ENCODE measurements at regions of chr6 and their contacts with region 1.

Region 1: DNA sequence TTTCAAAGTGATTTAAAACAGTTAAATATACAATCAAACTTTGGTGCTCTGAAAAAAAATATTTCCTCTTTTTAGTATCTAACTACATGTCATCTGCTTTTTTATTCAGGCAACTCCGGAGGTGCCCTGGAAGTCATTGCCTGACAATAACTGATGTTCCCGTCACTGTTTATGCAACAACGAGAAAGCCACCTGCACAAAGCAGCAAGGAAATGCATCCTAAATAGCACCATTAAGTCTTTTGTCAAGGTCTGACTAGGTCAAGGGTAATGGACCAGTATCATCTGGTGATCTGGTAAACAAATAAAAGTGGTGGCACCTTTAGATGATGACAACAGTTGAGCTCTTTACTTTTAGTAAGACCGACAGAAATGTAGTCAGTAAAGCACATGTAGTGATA is 13.2 kb downstream of the FAM229B start:
- DNase-seq: no peak
- ATAC-seq: no peak
- H3K4me3 ChIP-seq: no peak overlapping the region
- H3K4me3 Mint-ChIP-seq: no peak overlapping the region
- H3K27ac ChIP-seq: no peak overlapping the region
- H3K27ac Mint-ChIP-seq: no peak overlapping the region
- H3K4me1 ChIP-seq: no peaks in the 10 kb centered on the region
- H3K4me1 Mint-ChIP-seq: no peaks in the 10 kb centered on the region
- H3K27me3 ChIP-seq: no peaks in the 10 kb centered on the region
- H3K27me3 Mint-ChIP-seq: no peaks in the 10 kb centered on the region
- CTCF ChIP-seq: no peak

Region 2: DNA sequence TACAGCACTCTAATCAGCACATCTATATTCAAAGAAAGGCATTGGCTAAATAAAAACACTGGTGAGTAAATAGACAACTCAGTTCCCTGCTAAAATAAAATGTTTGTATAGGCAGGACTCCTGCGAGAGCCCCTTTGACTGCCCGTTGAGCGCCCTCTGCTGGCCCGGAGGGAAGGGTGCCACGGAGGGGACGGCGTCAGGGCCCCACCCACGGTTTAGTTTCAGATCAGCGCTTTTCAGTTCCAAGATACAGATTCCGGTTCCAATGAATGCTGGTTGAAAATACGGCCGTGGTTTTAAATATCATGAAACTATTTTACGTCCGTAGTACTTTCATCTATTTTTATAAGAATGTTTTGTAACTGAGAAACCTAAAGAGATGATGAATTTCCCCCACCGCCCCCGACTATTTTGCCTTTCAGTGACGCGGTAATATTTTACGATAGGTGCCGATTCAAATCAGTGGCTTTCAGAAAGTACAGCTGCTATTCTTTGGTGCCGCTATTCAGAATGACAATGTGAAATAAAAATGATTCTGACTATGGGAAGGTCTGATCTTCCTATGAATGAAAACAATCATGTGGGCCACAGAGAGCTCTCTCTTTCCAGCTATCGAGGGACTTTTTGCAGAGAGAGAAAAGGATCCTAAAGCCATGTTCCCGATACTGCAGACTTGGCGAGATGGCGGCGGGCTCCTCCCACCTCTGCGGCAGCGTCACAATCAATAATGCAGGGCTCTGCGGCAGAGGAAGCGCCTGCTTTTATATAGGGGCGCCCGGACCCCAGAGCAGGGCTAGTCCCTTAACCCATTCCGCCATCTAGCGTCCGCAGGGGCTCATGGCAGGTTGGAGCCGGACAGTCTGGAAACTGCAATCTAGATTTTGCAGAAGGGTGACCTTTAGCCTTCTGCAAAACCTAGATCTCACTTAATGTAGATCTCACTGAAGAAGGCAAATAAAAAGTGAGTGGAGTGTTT is 57.2 kb before region 1 on chr6:
- CTCF ChIA-PET with region 1: no interaction called
- POLR2A ChIA-PET with region 1: no interaction called
- intact Hi-C with region 1: no loop called
- DNase-seq: peak; percentile 87 to 96 (median 93)
- ATAC-seq: peak; percentile 93
- H3K4me3 ChIP-seq: peak overlapping the region; percentile 56 to 65
- H3K4me3 Mint-ChIP-seq: peak overlapping the region; percentile 97
- H3K27ac ChIP-seq: peak overlapping the region; percentile 83 to 88
- H3K27ac Mint-ChIP-seq: peak overlapping the region; percentile 99
- H3K4me1 ChIP-seq: peaks cover 6% of the 10 kb centered on the region
- H3K4me1 Mint-ChIP-seq: peaks cover 21% of the 10 kb centered on the region
- H3K27me3 ChIP-seq: no peaks in the 10 kb centered on the region
- H3K27me3 Mint-ChIP-seq: no peaks in the 10 kb centered on the region
- CTCF ChIP-seq: peak; percentile 82

Region 3: DNA sequence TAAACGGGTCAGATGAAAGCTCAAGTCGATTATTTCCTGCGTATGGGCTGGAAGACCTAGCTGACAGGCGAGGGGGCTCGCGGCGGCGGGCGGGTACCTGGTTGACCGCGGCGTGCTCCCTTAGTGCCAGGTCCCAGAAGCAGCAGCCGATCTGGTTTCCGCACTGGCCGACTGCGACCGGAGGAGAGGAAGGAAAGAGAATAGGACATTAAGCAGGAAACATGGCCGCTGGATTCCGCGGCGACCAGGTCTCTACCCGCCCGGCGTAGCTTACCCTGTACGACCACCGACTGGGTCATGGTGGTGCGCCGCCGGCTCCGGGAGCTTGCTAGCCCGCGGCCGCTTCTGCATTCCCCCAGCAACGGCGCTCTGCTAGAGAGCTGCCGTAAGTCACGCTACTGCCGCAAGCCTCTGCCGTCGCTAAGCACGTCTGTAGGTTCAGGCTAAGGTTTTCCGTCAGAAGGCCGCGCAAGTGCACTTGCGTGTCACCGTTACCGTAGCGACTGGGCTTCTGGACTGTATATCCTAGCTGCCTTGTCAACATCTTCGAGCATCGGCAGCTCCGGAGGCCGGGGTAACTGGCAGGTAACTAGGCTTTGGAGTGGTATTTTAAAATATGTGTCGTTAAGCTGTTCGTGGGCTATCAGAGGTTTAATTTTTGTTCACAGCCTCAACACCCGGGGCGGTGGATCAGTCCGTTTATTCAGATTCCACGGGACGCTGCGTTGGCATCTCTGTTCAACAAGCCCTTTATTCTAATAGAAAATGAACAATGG is 13.2 kb before region 1 on chr6 and contains the starts of genes FAM229B and TUBE1:
- CTCF ChIA-PET with region 1: no interaction called
- POLR2A ChIA-PET with region 1: no interaction called
- intact Hi-C with region 1: no loop called
- DNase-seq: peak; percentile 82 to 97 (median 89)
- ATAC-seq: peak; percentile 97
- H3K4me3 ChIP-seq: peak within 1 kb of the TSS; percentile 75 to 80
- H3K4me3 Mint-ChIP-seq: no peak within 1 kb of the TSS
- H3K27ac ChIP-seq: peak within 1 kb of the TSS; percentile 89 to 97
- H3K27ac Mint-ChIP-seq: no peak within 1 kb of the TSS
- H3K4me1 ChIP-seq: peaks cover 9% of the 10 kb centered on the region
- H3K4me1 Mint-ChIP-seq: peaks cover 12% of the 10 kb centered on the region
- H3K27me3 ChIP-seq: no peaks in the 10 kb centered on the region
- H3K27me3 Mint-ChIP-seq: peaks cover 3% of the 10 kb centered on the region
- CTCF ChIP-seq: no peak
- total RNA-seq, gene FAM229B: 3.1 to 3.3 TPM
- total RNA-seq, gene TUBE1: 25.6 to 30.5 TPM

Region 4: GRCh38 chr6:112173221-112173804 is 72.8 kb after region 1 on chr6:
- CTCF ChIA-PET with region 1: no interaction called
- POLR2A ChIA-PET with region 1: no interaction called
- intact Hi-C with region 1: loop called in 1 of 2 experiments (anchors 2 kb)
- DNase-seq: no peak
- ATAC-seq: no peak
- H3K4me3 ChIP-seq: no peak overlapping the region
- H3K4me3 Mint-ChIP-seq: no peak overlapping the region
- H3K27ac ChIP-seq: no peak overlapping the region
- H3K27ac Mint-ChIP-seq: no peak overlapping the region
- H3K4me1 ChIP-seq: no peaks in the 10 kb centered on the region
- H3K4me1 Mint-ChIP-seq: no peaks in the 10 kb centered on the region
- H3K27me3 ChIP-seq: no peaks in the 10 kb centered on the region
- H3K27me3 Mint-ChIP-seq: peaks cover 25% of the 10 kb centered on the region
- CTCF ChIP-seq: no peak

Region 5: DNA sequence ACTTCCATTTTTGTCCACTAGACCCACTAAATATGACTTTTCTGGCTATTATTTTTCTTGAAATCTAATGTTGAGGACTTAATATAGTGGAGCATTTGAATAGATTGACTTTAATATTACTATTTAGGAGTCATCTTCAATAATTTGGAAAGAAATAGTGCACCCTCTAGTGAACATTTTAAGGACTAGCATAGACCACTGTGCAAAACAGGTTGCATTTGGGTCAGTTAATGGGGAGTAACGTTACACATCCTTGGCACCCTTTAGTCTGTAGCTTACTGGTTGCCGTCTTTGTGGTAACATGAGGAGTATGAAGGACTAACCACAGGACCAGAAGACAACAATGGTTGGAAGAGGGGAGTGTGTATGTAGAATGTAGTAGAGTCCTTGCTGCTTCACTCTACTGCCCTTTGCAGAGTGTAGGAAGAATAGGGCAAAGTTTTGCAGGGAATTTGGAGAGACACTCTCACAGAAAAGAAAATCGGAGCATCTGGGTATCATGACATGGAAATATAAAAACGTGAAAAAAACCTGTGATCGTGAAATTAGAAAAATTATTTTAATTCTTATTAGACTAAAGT is 271.8 kb after region 1 on chr6:
- CTCF ChIA-PET with region 1: no interaction called
- POLR2A ChIA-PET with region 1: no interaction called
- intact Hi-C with region 1: no loop called
- DNase-seq: no peak
- ATAC-seq: no peak
- H3K4me3 ChIP-seq: no peak overlapping the region
- H3K4me3 Mint-ChIP-seq: no peak overlapping the region
- H3K27ac ChIP-seq: no peak overlapping the region
- H3K27ac Mint-ChIP-seq: no peak overlapping the region
- H3K4me1 ChIP-seq: no peaks in the 10 kb centered on the region
- H3K4me1 Mint-ChIP-seq: no peaks in the 10 kb centered on the region
- H3K27me3 ChIP-seq: no peaks in the 10 kb centered on the region
- H3K27me3 Mint-ChIP-seq: peaks cover 17% of the 10 kb centered on the region
- CTCF ChIP-seq: no peak